Colonic mucosa (tissue), 4 donors: ENCODE measurements at regions of chr12 and their contacts with region 1.

Region 1: GRCh38 chr12:108664338-108665258 is 30.9 kb upstream of the SELPLG start:
- DNase-seq: peak; percentile 89
- H3K4me3 ChIP-seq: no peak overlapping the region
- H3K27ac ChIP-seq: peak overlapping the region; percentile 38
- H3K4me1 ChIP-seq: no peaks in the 10 kb centered on the region
- H3K27me3 ChIP-seq: no peaks in the 10 kb centered on the region
- CTCF ChIP-seq: peak; percentile 74

Region 2: GRCh38 chr12:108803428-108804105 is 139.0 kb after region 1 on chr12:
- intact Hi-C with region 1: loop called (anchors 2 kb)
- DNase-seq: peak; percentile 85
- H3K4me3 ChIP-seq: no peak overlapping the region
- H3K27ac ChIP-seq: peak overlapping the region; percentile 69
- H3K4me1 ChIP-seq: no peaks in the 10 kb centered on the region
- H3K27me3 ChIP-seq: no peaks in the 10 kb centered on the region
- CTCF ChIP-seq: peak; percentile 87